ENCODE measurements at regions of chr1 and their contacts with region 1.

Region 1: DNA sequence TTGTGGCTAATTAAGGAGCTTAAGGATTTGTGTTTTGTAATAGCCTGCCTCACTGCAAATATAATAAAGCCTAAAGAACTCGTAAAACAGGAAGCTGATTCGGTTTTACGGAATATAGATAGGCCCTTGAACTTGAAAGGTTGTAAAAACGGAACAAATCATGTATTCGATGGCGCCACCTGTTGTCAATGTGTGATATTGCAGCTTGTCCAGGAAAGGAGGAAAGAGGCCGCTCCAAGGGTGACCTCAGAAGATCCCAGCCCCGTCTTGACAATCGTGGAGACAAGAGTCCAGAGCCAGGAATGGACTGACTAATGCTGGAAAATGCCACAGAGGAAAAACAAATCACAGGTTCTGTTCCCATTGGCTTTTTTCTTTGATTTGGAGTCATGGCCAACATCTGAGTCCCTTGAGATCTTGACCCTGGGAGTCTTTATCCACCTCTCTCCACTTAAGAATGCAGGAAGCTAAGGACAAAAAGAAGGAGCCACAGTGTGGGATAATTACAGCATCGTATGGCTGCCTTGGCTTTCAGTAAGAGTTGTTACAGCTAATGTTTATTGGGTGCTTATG is 7.0 kb upstream of the IGSF21 start:
- DNase-seq: peak in 1 of 2 experiments; percentile 32
- H3K4me3 ChIP-seq: no peak overlapping the region
- H3K27ac ChIP-seq: no peak overlapping the region
- H3K4me1 ChIP-seq: no peaks in the 10 kb centered on the region
- H3K27me3 ChIP-seq: peaks cover 20% of the 10 kb centered on the region
- CTCF ChIP-seq: peak; percentile 81

Region 2: GRCh38 chr1:17661546-17662157 is 438.9 kb before region 1 on chr1:
- CTCF ChIA-PET with region 1: no interaction called
- POLR2A ChIA-PET with region 1: no interaction called
- intact Hi-C with region 1: loop called (anchors 1 kb)
- DNase-seq: peak in 1 of 2 experiments; percentile 56
- H3K4me3 ChIP-seq: no peak overlapping the region
- H3K27ac ChIP-seq: no peak overlapping the region
- H3K4me1 ChIP-seq: no peaks in the 10 kb centered on the region
- H3K27me3 ChIP-seq: no peaks in the 10 kb centered on the region
- CTCF ChIP-seq: peak; percentile 89

Region 3: DNA sequence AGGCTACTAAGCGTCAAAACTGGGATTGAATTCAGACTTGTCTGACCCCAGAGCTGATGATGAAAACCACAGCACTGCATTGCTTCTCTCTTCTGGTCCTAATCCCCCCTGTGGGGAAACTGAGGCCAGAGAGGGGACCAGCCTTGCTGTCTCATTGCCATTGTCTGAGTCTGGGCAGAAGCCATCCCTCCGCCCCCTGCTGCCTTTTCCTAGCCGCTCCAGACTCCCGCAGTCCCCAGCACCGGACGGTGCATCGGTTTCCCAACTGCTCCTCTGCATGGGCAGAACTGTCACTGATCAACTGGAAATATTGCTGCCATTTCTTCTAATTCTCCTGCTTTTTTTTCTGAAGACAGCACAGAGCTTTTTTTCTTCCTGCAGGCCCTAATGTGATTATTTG is 188.1 kb before region 1 on chr1:
- CTCF ChIA-PET with region 1: no interaction called
- POLR2A ChIA-PET with region 1: no interaction called
- intact Hi-C with region 1: no loop called
- DNase-seq: no peak
- H3K4me3 ChIP-seq: no peak overlapping the region
- H3K27ac ChIP-seq: no peak overlapping the region
- H3K4me1 ChIP-seq: no peaks in the 10 kb centered on the region
- H3K27me3 ChIP-seq: peaks cover 71% of the 10 kb centered on the region
- CTCF ChIP-seq: no peak

Region 4: GRCh38 chr1:17922833-17923232 is 177.7 kb before region 1 on chr1:
- CTCF ChIA-PET with region 1: no interaction called
- POLR2A ChIA-PET with region 1: no interaction called
- intact Hi-C with region 1: loop called (anchors 5 kb)
- DNase-seq: peak in 1 of 2 experiments; percentile 5
- H3K4me3 ChIP-seq: no peak overlapping the region
- H3K27ac ChIP-seq: no peak overlapping the region
- H3K4me1 ChIP-seq: no peaks in the 10 kb centered on the region
- H3K27me3 ChIP-seq: peaks cover 27% of the 10 kb centered on the region
- CTCF ChIP-seq: peak; percentile 56; the same call in 1 of the 2 replicates

Region 5: GRCh38 chr1:18010945-18011344 is 89.6 kb before region 1 on chr1:
- CTCF ChIA-PET with region 1: no interaction called
- POLR2A ChIA-PET with region 1: no interaction called
- intact Hi-C with region 1: no loop called
- DNase-seq: no peak
- H3K4me3 ChIP-seq: no peak overlapping the region
- H3K27ac ChIP-seq: no peak overlapping the region
- H3K4me1 ChIP-seq: no peaks in the 10 kb centered on the region
- H3K27me3 ChIP-seq: peaks cover 25% of the 10 kb centered on the region
- CTCF ChIP-seq: no peak

Region 6: DNA sequence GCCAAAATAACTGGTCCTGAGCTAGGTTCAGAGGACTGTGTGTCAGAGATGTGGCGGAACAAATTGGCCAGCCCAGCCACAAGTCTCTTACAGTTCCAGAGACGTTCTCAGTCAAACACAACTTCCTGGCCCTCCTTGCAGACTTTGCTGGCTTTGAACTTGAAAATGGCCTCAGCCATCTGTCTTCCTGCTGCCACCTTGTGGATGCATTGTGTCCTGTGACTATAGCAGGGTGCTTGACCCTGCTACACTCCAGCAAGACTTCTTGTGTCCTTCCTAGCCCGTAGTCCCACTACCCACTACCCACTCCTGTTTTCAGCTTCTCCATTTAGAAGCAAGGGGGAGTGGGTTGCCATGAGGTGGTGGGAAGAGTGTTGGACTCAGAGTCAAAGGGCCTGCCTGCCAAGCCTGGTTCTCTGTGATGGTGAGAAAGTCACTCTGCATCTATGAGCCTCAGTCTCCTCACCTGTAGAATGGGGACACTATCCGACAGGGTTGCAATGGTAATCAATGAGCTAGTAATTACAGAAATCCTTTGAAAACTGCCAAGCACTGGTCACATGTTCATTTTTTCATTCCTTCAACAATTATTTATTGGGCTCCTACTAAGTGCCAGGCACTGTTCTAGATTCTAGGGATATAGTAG is 116.9 kb after region 1 on chr1:
- CTCF ChIA-PET with region 1: no interaction called
- POLR2A ChIA-PET with region 1: no interaction called
- intact Hi-C with region 1: no loop called
- DNase-seq: peak in 1 of 2 experiments; percentile 3
- H3K4me3 ChIP-seq: no peak overlapping the region
- H3K27ac ChIP-seq: no peak overlapping the region
- H3K4me1 ChIP-seq: no peaks in the 10 kb centered on the region
- H3K27me3 ChIP-seq: peaks cover 52% of the 10 kb centered on the region
- CTCF ChIP-seq: peak; percentile 41; the same call in 1 of the 2 replicates